ENCODE measurements at regions of chr11 and their contacts with region 1.

Region 1: DNA sequence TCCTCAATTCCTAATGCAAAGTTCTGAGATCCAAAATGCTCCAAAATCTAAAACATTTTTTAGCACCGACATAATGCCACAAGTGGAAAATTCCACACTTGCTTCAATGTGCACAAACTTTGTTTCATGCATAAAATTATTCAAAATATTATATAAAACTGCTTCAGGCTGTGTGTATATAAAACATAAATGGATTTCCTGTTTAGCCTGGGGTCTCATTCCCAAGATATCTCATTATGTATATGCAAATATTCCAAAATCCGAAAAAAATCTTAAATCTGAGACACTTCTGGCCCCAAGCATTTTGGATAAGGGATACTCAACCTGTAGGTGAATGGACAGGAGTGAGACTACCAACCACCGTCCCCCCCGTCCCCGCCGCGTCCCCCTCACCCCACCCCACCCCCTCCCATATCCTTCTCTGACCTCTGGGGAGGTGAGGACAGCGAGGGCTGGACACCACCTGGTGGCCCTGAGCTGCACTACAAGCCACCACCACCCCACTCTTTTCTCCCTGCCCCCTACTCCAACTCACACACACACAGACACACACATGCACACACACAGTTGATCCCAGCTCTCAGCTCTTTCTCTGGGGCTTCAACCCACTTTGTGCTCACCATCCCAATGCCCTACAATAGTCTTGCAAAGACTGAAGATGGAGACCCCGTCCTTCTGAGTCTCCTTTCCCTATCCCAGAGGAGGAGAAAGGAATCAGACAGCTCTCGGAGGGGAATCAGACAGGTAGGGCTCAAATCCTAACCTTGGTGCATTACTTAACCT is 101.0 kb downstream of the PDE2A start:
- DNase-seq: no peak
- H3K4me3 ChIP-seq: no peak overlapping the region
- CTCF ChIP-seq: peak; percentile 77

Region 2: GRCh38 chr11:72425053-72425980 is 147.9 kb before region 1 on chr11:
- CTCF ChIA-PET with region 1: no interaction called
- POLR2A ChIA-PET with region 1: no interaction called
- DNase-seq: no peak
- H3K4me3 ChIP-seq: no peak overlapping the region
- CTCF ChIP-seq: no peak

Region 3: DNA sequence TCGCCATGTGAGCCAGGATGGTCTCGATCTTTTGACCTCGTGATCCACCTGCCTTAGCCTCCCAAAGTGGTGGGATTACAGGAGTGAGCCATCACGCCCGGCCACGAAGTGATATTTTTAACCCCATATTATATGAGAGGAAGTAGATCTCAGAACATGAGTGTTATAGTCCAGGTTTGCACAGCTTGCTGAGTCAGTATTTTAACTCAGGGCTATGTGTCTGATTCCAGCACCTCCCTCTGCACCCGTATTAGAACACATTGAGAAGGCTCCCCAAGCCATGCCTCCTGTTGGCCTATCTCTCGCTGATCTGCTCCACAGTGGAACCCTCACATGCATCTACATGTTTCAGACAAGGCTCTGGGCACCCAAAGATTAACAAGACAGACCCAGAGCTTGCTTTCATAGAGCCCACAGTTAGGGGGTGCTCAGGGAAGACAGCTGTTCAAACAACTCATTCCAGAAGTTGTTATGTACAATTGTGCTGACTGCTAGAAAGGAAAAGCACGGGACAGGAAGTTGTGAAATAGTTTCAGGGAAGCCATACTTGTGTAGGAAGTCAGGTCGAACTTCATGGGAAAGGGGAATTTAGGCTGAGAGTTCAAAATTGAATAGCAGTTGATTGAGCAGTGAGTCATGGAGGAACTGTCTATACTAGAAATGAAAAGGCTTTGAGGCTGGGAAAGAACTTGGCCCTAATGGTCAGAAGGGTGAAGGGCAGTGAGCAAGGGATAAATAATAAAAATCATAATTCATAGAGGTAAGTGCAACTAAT is 89.7 kb before region 1 on chr11:
- CTCF ChIA-PET with region 1: interaction called, 10 read pairs
- POLR2A ChIA-PET with region 1: no interaction called
- DNase-seq: no peak
- H3K4me3 ChIP-seq: no peak overlapping the region
- CTCF ChIP-seq: no peak

Region 4: GRCh38 chr11:72561856-72562255 is 11.4 kb before region 1 on chr11:
- CTCF ChIA-PET with region 1: interaction called, 21 read pairs
- POLR2A ChIA-PET with region 1: no interaction called
- DNase-seq: no peak
- H3K4me3 ChIP-seq: no peak overlapping the region
- CTCF ChIP-seq: no peak

Region 5: GRCh38 chr11:72676861-72677341 is 103.6 kb after region 1 on chr11:
- CTCF ChIA-PET with region 1: no interaction called
- POLR2A ChIA-PET with region 1: no interaction called
- DNase-seq: no peak
- H3K4me3 ChIP-seq: no peak overlapping the region
- CTCF ChIP-seq: no peak

Region 6: DNA sequence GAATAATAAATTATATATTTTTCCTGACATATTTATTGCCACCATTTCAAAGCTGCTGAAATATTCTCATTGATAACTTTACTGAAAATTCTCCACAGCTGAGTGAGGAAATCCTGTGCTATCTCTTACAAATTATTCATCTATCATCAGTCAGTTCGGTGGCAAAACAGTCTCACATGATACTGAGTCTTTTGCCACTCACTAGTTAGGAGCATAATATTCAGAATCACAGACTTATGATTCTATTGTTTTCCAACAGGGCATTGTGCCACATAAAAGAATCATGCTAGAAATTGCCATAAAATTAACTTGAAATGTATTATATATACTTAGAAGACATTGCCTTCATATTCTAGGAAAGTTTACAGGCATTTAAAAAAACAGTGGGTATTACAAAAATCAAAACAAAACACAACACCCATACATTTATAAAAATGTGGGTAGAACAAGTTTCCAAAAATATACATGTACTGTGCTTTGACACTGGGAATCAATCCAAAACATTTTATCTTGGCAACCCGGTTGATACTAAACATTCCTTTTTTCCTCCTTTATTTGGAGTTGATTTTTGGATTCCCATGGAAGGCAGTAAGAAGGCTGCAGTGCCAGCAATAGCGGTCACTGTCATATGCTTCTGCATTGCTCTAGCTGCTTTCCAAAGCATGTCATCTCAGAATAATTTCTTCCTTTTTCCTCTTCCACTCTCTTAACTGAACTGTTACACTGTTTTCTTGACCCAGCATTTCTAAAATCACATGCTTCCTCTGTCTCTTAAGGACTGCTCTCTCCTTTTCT is 283.5 kb after region 1 on chr11:
- CTCF ChIA-PET with region 1: no interaction called
- POLR2A ChIA-PET with region 1: no interaction called
- DNase-seq: no peak
- H3K4me3 ChIP-seq: no peak overlapping the region
- CTCF ChIP-seq: peak; percentile 13